CD4-positive, alpha-beta memory T cell (primary cell): ENCODE measurements at regions of chr10 and their contacts with region 1.

Region 1: DNA sequence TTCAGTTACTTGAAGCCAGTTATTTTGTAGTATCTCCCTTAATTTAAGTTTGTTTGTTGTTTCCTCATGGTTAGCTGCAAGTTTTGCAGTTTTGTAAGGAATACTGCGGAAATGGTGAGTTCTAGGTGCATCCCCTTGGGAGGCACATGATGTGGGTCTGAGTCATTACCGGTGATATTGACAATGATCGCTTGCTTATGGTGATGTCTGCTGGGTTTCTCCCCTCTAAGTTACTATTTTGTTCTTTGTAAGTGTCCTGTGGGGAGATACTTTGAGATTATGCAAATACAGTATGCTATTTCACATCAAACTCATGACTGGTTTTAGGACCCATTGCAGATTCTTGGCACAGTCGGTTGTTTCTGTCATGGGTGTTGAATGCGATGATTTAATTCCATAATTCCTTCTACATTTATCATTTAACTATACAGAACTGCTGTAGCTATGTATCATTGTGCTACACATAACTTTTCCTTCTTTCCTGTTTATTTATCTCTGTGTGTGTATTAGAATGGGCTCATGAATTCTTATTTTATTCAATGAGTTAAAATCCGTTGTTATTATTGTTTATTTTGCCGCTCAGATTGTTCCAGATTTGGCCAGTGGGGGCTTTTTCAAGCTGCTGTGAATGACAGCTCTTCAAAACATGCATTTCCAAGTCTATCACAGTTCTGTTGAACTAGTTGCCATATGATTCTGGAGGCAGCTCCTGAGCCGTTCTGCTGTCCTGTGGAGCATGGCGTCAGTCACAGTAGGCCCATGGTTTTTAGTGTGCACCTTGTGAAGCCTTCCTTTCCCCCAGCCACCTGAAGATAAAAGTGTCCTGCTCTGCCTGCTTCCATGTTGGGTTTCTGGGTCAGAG is 18.4 kb downstream of the TSPAN14 start:
- DNase-seq: peak in 2 of 5 donors; percentile 51 to 83
- H3K4me3 ChIP-seq: peak overlapping the region in 1 of 2 donors; percentile 29
- H3K4me3 Mint-ChIP-seq: peak overlapping the region; percentile 32 to 97 (median 73)
- H3K27ac ChIP-seq: peak overlapping the region; percentile 69
- H3K27ac Mint-ChIP-seq: peak overlapping the region; percentile 88 to 96 (median 94)
- H3K4me1 ChIP-seq: peaks cover 100% of the 10 kb centered on the region
- H3K4me1 Mint-ChIP-seq: peaks cover 65 to 94% (median 83%) of the 10 kb centered on the region in 4 donors
- H3K27me3 ChIP-seq: no peaks in the 10 kb centered on the region
- H3K27me3 Mint-ChIP-seq: no peaks in the 10 kb centered on the region

Region 2: DNA sequence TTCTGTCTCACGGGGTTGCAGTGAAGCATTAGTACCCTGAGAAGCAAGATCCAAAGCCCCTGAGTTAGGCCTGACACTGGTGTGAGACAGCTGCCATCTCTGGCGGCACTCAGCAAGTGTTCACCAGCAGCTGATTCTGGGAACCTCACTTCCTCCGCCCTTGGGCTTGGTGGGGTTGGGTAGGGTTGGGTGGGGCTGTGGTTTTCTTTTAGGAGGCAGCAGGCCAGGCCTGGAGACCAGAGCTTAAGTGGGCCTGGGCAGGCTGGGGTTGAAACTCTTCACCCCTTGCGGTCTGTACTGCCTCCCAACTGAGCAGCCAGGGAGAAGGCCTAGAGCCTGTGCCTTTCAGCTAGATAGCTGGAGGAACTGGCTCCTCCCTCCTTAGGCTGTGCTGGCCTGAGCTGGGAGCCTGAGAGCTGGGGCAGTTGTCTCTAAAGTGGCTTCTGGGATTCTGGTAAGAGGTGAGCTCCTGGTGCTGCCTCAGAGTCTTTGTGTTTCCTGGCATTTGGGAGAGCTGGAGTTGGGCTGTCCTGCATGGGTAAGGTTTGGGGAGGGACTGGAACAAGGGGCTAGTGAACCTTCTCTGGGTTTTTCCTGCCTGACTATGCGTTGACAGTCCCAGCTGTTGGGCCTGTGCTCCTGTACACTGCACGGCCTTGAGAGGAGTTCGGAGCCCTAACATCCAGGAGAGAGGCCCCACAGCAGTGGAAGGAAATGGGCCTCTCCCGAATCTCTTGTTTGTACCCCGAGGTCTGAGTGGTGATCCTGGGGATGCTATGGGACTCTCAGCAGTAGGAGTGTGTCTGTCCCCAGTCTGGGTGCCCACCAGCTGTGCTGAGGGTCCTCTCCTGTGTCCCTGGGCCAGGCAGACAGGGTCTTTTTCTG is 13.2 kb before region 1 on chr10:
- CTCF ChIA-PET with region 1: interaction called, 74 read pairs
- POLR2A ChIA-PET with region 1: interaction called, 598 read pairs
- intact Hi-C with region 1: loop called (anchors 1 kb)
- DNase-seq: peak; percentile 51 to 83 (median 66)
- H3K4me3 ChIP-seq: peak overlapping the region; percentile 67 to 76
- H3K4me3 Mint-ChIP-seq: peak overlapping the region; percentile 90 to 100 (median 98)
- H3K27ac ChIP-seq: peak overlapping the region; percentile 83
- H3K27ac Mint-ChIP-seq: peak overlapping the region; percentile 88 to 100 (median 96)
- H3K4me1 ChIP-seq: peaks cover 84% of the 10 kb centered on the region
- H3K4me1 Mint-ChIP-seq: peaks cover 71 to 93% (median 79%) of the 10 kb centered on the region in 4 donors
- H3K27me3 ChIP-seq: no peaks in the 10 kb centered on the region
- H3K27me3 Mint-ChIP-seq: no peaks in the 10 kb centered on the region